GM18951 (cell line): ENCODE measurements at regions of chr16 and their contacts with region 1.

Region 1: GRCh38 chr16:12095275-12096156 is 119.0 kb downstream of the SNX29 start:
- POLR2A ChIP-seq: no peak

Region 2: DNA sequence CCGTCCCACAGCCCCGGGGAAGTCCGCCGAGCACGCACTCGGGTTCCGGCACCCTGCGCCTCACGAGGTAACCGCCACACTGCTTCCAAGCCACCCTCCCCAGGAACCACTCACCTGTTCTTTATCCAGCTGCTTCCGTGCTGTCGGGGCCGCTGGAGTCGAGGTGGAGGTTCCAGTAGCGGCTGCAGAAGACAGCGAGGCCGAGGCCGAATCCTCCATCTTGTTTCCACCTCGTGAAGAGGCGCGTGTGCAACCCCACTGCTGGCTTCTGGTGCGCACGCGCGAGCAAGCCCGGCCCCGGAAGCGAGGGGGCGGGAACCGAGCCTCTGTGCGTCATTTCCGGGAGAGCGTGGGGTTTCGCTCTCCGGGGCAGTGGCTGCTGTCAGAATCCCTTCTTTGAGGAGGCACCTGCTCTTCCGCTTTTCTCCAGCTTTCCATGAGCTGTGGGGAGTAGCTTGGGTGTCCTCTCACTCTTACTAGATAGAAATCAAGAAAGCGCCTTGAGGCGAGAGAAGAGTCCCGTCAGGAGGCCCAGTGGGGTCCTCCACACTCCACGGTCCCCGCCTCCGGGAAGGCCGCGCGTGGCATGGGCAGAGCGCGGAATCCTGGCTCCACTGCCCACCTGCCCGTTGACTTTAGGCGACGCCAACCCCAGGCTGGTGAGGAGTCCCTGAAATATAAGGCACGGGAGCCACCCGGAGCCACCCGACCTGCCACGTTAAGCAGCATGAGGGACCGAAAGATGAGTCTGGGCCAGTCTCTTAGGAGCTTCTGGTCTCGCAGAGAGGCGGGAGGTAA is 244.0 kb before region 1 on chr16 and contains the start of gene RSL1D1:
- in situ Hi-C with region 1: no loop called
- POLR2A ChIP-seq: peak; percentile 98

Region 3: GRCh38 chr16:12147681-12148080 is 52.2 kb after region 1 on chr16:
- in situ Hi-C with region 1: no loop called
- POLR2A ChIP-seq: no peak

Region 4: GRCh38 chr16:12803203-12804097 is 707.9 kb after region 1 on chr16 and contains the start of gene CPPED1:
- in situ Hi-C with region 1: loop called (anchors 25 kb)
- POLR2A ChIP-seq: peak; percentile 72